IMR-90 (cell line): ENCODE measurements at regions of chr18 and their contacts with region 1.

Region 1: DNA sequence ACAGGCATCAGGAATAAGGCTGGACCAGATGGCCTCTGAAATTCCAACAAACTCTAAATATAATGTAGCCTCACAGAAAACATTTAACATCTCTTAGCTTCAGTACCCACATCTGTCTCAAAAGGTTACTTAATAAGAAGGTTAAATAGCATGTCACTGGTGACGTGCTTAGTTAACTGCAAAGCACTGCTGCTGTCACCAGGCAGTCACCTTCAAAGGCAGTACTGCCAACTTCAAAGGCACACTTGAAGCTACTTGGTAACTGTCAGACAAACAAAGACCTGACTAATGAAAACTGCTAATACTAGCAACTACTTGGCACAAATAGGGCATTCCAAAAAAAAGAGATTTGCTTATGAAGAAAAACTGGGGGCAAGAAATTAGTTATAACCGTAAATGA is 36.2 kb downstream of the EPG5 start:
- DNase-seq: no peak
- ATAC-seq: no peak
- H3K4me3 ChIP-seq: no peak overlapping the region
- H3K27ac ChIP-seq: no peak overlapping the region
- H3K4me1 ChIP-seq: peaks cover 9% of the 10 kb centered on the region
- H3K27me3 ChIP-seq: no peaks in the 10 kb centered on the region
- CTCF ChIP-seq: no peak
- POLR2A ChIP-seq: no peak
- RAD21 ChIP-seq: no peak

Region 2: DNA sequence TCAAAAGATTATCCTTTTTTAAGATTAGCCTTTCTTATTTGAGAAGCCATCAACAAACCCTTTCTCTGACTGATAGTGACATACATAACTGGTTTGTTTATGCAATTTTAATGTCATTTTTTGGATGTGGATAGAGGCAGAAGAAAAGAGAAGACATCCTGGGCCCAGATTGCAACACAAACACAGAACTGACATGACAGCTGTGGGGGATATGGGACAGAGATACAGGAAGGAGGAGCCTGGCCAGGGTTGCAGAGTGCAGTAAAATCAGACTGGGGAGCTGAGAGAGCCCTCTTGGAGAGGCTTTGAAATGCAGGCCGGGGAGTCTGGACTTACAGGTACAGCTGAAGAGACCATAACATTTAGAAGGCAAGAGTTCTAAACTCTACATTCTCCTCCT is 40.4 kb before region 1 on chr18:
- CTCF ChIA-PET with region 1: interaction called, 5 read pairs
- POLR2A ChIA-PET with region 1: no interaction called
- dilution Hi-C with region 1: no loop called
- in situ Hi-C with region 1: no loop called
- intact Hi-C with region 1: loop called (anchors 5 kb)
- DNase-seq: no peak
- ATAC-seq: no peak
- H3K4me3 ChIP-seq: no peak overlapping the region
- H3K27ac ChIP-seq: no peak overlapping the region
- H3K4me1 ChIP-seq: 0 out of 2 replicates have a peak, but pooled peaks cover 2% of the 10 kb centered on the region
- H3K27me3 ChIP-seq: no peaks in the 10 kb centered on the region
- CTCF ChIP-seq: no peak
- POLR2A ChIP-seq: no peak
- RAD21 ChIP-seq: no peak

Region 3: GRCh38 chr18:46073474-46074331 is 142.7 kb after region 1 on chr18:
- CTCF ChIA-PET with region 1: no interaction called
- POLR2A ChIA-PET with region 1: no interaction called
- dilution Hi-C with region 1: no loop called
- in situ Hi-C with region 1: no loop called
- intact Hi-C with region 1: loop called (anchors 5 kb)
- DNase-seq: peak; percentile 69
- ATAC-seq: peak; percentile 52
- H3K4me3 ChIP-seq: no peak overlapping the region
- H3K27ac ChIP-seq: no peak overlapping the region
- H3K4me1 ChIP-seq: peaks cover 20% of the 10 kb centered on the region
- H3K27me3 ChIP-seq: no peaks in the 10 kb centered on the region
- CTCF ChIP-seq: peak; percentile 76
- POLR2A ChIP-seq: no peak
- RAD21 ChIP-seq: peak; percentile 82

Region 4: DNA sequence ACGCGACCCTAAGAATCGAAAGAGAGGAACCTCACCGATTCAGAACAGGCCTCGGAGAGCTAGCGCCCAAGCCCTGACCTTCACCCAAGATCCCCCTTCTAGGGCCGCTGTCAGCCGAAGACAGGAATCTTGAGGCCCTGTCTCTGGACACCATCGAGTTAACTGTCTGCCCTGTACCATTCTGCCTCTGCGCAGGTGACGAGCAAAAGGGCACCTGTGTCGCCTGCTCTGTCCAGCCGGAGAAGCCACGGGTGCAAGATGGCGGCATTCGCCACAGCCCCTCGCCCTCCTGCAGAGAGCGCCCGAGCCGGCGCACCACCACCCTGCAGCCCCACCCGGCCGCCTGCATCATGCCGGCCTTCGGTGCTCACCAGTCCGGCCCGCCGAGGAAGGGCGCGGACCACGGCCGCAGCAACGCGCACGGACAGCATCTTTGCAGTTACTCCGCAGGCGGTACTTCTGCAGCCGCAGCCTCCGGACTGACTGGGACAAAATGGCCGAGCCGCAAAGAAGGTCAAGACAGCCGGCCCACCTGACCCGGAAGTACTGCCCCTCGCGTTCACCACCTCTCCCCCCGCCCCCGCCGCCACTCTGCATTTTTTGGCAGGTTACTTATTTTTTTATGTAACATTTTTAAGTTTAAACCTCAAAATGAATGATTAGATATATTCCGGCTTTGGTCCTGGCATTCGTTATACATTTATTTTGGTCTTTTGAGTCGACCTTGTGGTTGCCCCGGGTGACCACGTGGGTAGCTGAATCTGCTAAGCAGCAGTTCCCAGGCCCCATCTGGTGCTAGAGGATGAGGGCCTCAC is 167.0 kb after region 1 on chr18 and contains the start of gene ATP5F1A:
- CTCF ChIA-PET with region 1: no interaction called
- POLR2A ChIA-PET with region 1: no interaction called
- dilution Hi-C with region 1: no loop called
- in situ Hi-C with region 1: no loop called
- intact Hi-C with region 1: loop called (anchors 5 kb)
- DNase-seq: peak; percentile 77
- ATAC-seq: peak; percentile 92
- H3K4me3 ChIP-seq: peak within 1 kb of the TSS; percentile 91
- H3K27ac ChIP-seq: peak within 1 kb of the TSS; percentile 95
- H3K4me1 ChIP-seq: peaks cover 3% of the 10 kb centered on the region
- H3K27me3 ChIP-seq: no peaks in the 10 kb centered on the region
- CTCF ChIP-seq: 0 out of 2 replicates have a peak, but pooled peaks have one; percentile 5
- POLR2A ChIP-seq: peak; percentile 83
- RAD21 ChIP-seq: no peak
- total RNA-seq, gene ATP5F1A: 1,085 and 1,283 TPM in 2 replicates